CD8-positive, alpha-beta memory T cell (primary cell): ENCODE measurements at regions of chr1 and their contacts with region 1.

Region 1: GRCh38 chr1:155323798-155324610 is 3.3 kb downstream of the RUSC1 start:
- DNase-seq: peak; percentile 83 to 91 (median 87)
- H3K4me3 ChIP-seq: peak overlapping the region; percentile 97
- H3K4me3 Mint-ChIP-seq: peak overlapping the region; percentile 88 to 96 (median 89)
- H3K27ac ChIP-seq: peak overlapping the region; percentile 81
- H3K27ac Mint-ChIP-seq: peak overlapping the region in 7 of 8 donors; percentile 62 to 95 (median 89)
- H3K4me1 ChIP-seq: peaks cover 9% of the 10 kb centered on the region
- H3K4me1 Mint-ChIP-seq: peaks cover 22 to 41% (median 27%) of the 10 kb centered on the region in 3 donors
- H3K27me3 ChIP-seq: no peaks in the 10 kb centered on the region
- H3K27me3 Mint-ChIP-seq: peaks cover 0 to 2% of the 10 kb centered on the region in 2 donors

Region 2: GRCh38 chr1:155208541-155209311 is 115.3 kb before region 1 on chr1 and contains the start of gene MTX1:
- CTCF ChIA-PET with region 1: interaction called, 10 read pairs
- POLR2A ChIA-PET with region 1: interaction called, 3 read pairs
- DNase-seq: peak; percentile 87 to 96 (median 92)
- H3K4me3 ChIP-seq: peak within 1 kb of the TSS; percentile 100
- H3K4me3 Mint-ChIP-seq: peak within 1 kb of the TSS; percentile 82 to 93 (median 89)
- H3K27ac ChIP-seq: peak within 1 kb of the TSS; percentile 99
- H3K27ac Mint-ChIP-seq: peak within 1 kb of the TSS; percentile 92 to 99 (median 96)
- H3K4me1 ChIP-seq: peaks cover 23% of the 10 kb centered on the region
- H3K4me1 Mint-ChIP-seq: peaks cover 18 to 28% (median 26%) of the 10 kb centered on the region in 3 donors
- H3K27me3 ChIP-seq: no peaks in the 10 kb centered on the region
- H3K27me3 Mint-ChIP-seq: peaks cover 0 to 3% of the 10 kb centered on the region in 2 donors
- total RNA-seq, gene MTX1: 67.6 to 73.2 TPM

Region 3: DNA sequence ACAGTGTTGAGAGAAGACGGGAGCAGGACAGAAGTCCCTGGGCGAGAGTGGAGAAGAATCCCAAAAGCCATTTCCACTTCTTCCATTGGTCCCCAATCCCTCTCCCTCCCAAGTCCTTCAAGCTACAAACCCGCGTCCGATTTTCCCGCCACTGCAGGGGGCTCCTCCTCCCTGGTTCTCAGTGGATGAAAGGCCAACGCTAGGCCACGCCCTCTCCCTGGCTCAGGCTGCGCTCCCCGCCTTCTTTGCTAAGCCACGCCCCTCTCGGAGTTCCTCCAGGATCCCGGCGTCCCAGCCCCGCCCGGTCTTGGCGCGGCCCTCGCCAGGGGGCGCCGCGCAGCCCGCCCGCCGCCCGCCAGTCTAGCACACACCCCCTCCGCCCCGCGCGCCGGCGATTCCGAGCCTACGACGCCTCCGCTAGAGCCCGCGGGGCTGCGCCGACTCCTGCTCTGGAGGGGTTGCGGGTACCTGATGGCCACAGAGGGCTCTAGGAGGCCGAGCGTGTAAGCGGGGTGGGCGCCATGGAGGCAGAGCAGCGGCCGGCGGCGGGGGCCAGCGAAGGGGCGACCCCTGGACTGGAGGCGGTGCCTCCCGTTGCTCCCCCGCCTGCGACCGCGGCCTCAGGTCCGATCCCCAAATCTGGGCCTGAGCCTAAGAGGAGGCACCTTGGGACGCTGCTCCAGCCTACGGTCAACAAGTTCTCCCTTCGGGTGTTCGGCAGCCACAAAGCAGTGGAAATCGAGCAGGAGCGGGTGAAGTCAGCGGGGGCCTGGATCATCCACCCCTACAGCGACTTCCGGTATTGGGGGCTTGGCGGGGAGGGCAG is 46.7 kb before region 1 on chr1 and contains the start of gene HCN3:
- CTCF ChIA-PET with region 1: interaction called, 19 read pairs
- POLR2A ChIA-PET with region 1: interaction called, 3 read pairs
- DNase-seq: peak; percentile 82 to 94 (median 91)
- H3K4me3 ChIP-seq: peak within 1 kb of the TSS; percentile 59
- H3K4me3 Mint-ChIP-seq: peak within 1 kb of the TSS; percentile 68 to 89 (median 80)
- H3K27ac ChIP-seq: peak within 1 kb of the TSS; percentile 7
- H3K27ac Mint-ChIP-seq: peak within 1 kb of the TSS; percentile 56 to 87 (median 64)
- H3K4me1 ChIP-seq: peaks cover 33% of the 10 kb centered on the region
- H3K4me1 Mint-ChIP-seq: peaks cover 33 to 42% (median 37%) of the 10 kb centered on the region in 3 donors
- H3K27me3 ChIP-seq: no peaks in the 10 kb centered on the region
- H3K27me3 Mint-ChIP-seq: no peaks in the 10 kb centered on the region
- total RNA-seq, gene HCN3: 3.2 to 3.7 TPM

Region 4: DNA sequence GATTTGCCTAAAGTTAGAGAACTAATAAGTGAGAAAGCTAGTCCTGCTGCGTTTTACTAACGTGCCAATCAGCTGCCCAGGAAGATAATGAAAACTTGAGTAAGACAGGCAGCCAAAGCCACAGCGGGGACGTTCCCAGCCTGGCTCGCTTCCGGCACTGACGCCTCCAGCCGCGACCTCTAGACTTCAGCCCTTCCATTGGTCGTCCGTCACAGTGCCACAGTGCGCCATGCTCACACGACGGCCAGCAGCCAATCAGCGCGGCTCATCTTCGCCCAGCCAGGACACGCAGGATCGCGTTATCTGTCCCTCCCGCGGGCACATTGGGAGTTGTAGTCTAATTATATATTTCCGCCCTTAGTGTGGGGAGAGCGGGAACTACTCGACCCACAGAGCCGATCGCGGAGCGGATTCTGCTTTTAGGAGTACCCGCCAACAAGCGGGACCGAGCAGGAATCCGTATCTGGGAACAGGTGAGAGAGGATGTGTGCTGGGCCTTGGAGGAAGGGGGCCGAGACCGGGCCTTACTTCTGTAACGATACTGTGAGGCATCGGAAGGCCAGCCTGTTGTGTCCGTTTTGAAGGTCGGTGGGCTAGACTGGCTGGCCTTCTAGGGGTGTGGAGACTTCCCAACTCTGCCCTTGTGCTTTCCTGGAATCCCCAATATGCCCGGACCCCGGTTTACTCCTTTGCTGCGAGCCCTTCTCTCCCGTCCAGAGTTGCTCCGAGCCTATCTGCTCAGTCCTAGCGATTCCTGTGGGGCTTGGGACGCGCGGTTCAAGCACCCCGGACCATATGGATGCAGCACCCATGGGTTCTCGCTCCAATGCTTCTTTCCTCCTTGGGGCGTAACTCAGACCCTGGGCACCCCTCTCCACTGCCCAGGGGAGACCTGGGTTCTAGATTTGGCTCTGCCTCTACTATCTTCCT is 15.2 kb before region 1 on chr1 and contains the start of gene FDPS:
- CTCF ChIA-PET with region 1: interaction called, 25 read pairs
- POLR2A ChIA-PET with region 1: interaction called, 11 read pairs
- DNase-seq: peak; percentile 96 to 98 (median 97)
- H3K4me3 ChIP-seq: peak within 1 kb of the TSS; percentile 94
- H3K4me3 Mint-ChIP-seq: peak within 1 kb of the TSS; percentile 88 to 98 (median 97)
- H3K27ac ChIP-seq: peak within 1 kb of the TSS; percentile 93
- H3K27ac Mint-ChIP-seq: peak within 1 kb of the TSS; percentile 85 to 99 (median 98)
- H3K4me1 ChIP-seq: peaks cover 24% of the 10 kb centered on the region
- H3K4me1 Mint-ChIP-seq: peaks cover 20 to 34% (median 31%) of the 10 kb centered on the region in 3 donors
- H3K27me3 ChIP-seq: no peaks in the 10 kb centered on the region
- H3K27me3 Mint-ChIP-seq: no peaks in the 10 kb centered on the region
- total RNA-seq, gene FDPS: 194 to 199 TPM

Region 5: GRCh38 chr1:155410931-155411330 is 86.9 kb after region 1 on chr1:
- CTCF ChIA-PET with region 1: no interaction called
- POLR2A ChIA-PET with region 1: no interaction called
- DNase-seq: no peak
- H3K4me3 ChIP-seq: no peak overlapping the region
- H3K4me3 Mint-ChIP-seq: no peak overlapping the region
- H3K27ac ChIP-seq: no peak overlapping the region
- H3K27ac Mint-ChIP-seq: peak overlapping the region in 5 of 8 donors; percentile 8 to 61 (median 47)
- H3K4me1 ChIP-seq: no peaks in the 10 kb centered on the region
- H3K4me1 Mint-ChIP-seq: peaks cover 0 to 2% (median 0%) of the 10 kb centered on the region in 3 donors
- H3K27me3 ChIP-seq: no peaks in the 10 kb centered on the region
- H3K27me3 Mint-ChIP-seq: no peaks in the 10 kb centered on the region